ENCODE measurements at regions of chr12 and their contacts with region 1.

Region 1: DNA sequence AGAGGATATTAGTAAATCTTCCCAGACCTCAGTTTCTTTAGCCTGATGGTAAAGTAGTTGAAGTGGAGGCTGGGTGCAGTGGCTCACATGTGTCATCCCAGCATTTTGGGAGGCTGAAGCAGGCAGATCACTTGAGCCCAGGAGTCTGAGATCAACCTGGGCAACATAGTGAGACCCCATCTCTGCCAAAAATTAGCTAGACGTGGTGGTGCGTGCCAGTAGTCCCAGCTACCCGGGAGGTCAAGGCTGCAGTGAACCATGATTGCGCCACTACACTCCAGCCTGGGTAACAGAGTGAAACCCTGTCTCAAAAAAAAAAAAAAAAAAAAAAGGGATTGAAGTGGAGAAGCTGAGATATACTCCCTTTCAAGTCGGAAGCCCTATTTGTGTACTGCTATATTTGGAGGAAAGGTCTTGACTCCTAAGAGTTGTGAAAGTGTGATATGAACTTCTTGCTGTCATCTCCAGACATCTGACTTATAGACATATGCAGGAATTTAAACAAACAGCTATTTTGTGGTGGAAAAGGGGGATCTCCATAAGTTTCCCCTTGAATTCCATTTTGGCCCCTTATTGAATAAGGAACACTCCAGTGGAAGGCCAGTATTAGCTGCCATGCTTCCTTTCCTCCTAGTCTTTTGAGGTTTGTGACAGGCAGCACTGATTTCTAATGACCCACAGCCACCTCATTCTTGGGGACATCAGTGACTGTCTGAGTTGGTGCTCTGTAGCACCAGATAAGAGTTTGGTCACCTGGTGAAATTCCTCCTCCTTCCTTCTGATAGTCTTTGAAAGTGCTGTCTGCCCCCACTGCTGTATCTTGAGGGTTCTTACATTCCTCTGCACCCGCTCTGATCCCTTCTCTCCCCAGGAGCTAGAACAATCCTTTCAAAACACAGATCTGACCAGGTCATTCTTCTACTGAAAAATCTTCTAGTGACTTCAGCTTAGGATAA is 7.4 kb downstream of the ELK3 start:
- DNase-seq: peak; percentile 13
- H3K4me3 ChIP-seq: no peak overlapping the region
- H3K27ac ChIP-seq: peak overlapping the region; percentile 12
- H3K4me1 ChIP-seq: peaks cover 83% of the 10 kb centered on the region
- H3K27me3 ChIP-seq: no peaks in the 10 kb centered on the region
- CTCF ChIP-seq: no peak
- POLR2A ChIP-seq: no peak

Region 2: DNA sequence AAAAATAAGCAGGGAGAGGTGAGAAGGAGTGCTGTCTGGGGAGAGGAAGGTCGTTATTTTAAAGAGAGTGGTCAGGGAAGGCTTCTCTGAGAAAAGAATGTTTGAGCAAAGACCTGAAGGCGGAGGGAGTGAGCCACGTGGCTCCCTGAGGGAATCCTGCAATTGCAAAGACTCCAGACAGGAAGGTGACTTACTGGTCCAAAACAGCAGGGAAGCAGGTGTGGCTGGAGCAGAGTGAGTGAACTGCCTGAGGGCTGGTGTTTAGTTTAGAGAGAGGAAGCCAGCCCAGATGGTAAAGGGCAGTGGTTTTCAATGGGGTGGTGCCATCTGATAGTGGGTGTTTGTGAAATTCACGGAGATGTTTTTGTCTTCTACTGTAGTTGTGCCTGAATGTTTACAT is 107.3 kb before region 1 on chr12:
- CTCF ChIA-PET with region 1: no interaction called
- POLR2A ChIA-PET with region 1: no interaction called
- dilution Hi-C with region 1: no loop called
- intact Hi-C with region 1: no loop called
- DNase-seq: peak; percentile 93
- H3K4me3 ChIP-seq: no peak overlapping the region
- H3K27ac ChIP-seq: peak overlapping the region; percentile 26
- H3K4me1 ChIP-seq: peaks cover 20% of the 10 kb centered on the region
- H3K27me3 ChIP-seq: no peaks in the 10 kb centered on the region
- CTCF ChIP-seq: no peak
- POLR2A ChIP-seq: no peak

Region 3: DNA sequence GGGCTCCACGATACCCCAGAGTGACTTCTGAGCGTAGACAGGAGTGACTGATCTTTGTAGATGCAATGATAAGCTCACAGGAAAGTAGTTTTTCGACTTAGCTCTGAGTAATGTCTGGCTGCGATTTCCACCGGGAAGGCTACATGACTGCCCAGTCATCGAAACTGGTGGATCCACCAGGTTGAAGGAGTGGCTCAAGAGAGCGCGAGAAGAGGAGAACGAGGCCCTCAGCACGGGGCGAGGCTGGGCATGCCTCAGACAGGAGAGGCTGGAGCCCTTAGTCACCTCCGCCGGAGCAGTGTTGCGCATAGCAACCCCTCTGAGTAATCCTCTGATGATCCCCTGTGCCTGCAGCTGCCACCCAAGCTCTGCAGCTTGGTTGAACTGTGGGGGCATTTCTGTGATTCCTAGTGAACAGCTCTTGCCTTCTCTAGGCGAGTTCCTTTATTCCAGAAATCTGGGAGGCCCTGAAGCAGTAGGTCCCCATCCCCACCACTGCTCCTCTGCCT is 18.2 kb after region 1 on chr12:
- CTCF ChIA-PET with region 1: interaction called, 17 read pairs
- POLR2A ChIA-PET with region 1: interaction called, 8 read pairs
- dilution Hi-C with region 1: no loop called
- intact Hi-C with region 1: no loop called
- DNase-seq: peak; percentile 96
- H3K4me3 ChIP-seq: no peak overlapping the region
- H3K27ac ChIP-seq: peak overlapping the region; percentile 90
- H3K4me1 ChIP-seq: peaks cover 93% of the 10 kb centered on the region
- H3K27me3 ChIP-seq: no peaks in the 10 kb centered on the region
- CTCF ChIP-seq: no peak
- POLR2A ChIP-seq: peak; percentile 63

Region 4: GRCh38 chr12:96285158-96285557 is 83.6 kb after region 1 on chr12:
- CTCF ChIA-PET with region 1: no interaction called
- POLR2A ChIA-PET with region 1: no interaction called
- dilution Hi-C with region 1: no loop called
- intact Hi-C with region 1: no loop called
- DNase-seq: no peak
- H3K4me3 ChIP-seq: no peak overlapping the region
- H3K27ac ChIP-seq: no peak overlapping the region
- H3K4me1 ChIP-seq: no peaks in the 10 kb centered on the region
- H3K27me3 ChIP-seq: no peaks in the 10 kb centered on the region
- CTCF ChIP-seq: no peak
- POLR2A ChIP-seq: no peak

Region 5: GRCh38 chr12:96886998-96887677 is 685.6 kb after region 1 on chr12:
- CTCF ChIA-PET with region 1: no interaction called
- POLR2A ChIA-PET with region 1: no interaction called
- dilution Hi-C with region 1: no loop called
- intact Hi-C with region 1: no loop called
- DNase-seq: peak; percentile 26
- H3K4me3 ChIP-seq: no peak overlapping the region
- H3K27ac ChIP-seq: no peak overlapping the region
- H3K4me1 ChIP-seq: peaks cover 16% of the 10 kb centered on the region
- H3K27me3 ChIP-seq: no peaks in the 10 kb centered on the region
- CTCF ChIP-seq: no peak
- POLR2A ChIP-seq: no peak